ENCODE measurements at regions of chr22 and their contacts with region 1.

Region 1: GRCh38 chr22:37608477-37609239 is at the start of gene GGA1:
- DNase-seq: peak; percentile 82
- ATAC-seq: peak; percentile 74
- H3K4me3 Mint-ChIP-seq: peak within 1 kb of the TSS; percentile 90
- H3K27ac Mint-ChIP-seq: peak within 1 kb of the TSS; percentile 94
- H3K4me1 Mint-ChIP-seq: peaks cover 41% of the 10 kb centered on the region
- H3K27me3 Mint-ChIP-seq: peaks cover 15% of the 10 kb centered on the region
- CTCF ChIP-seq: no peak
- total RNA-seq, gene GGA1: 102 and 126 TPM in 2 replicates

Region 2: GRCh38 chr22:37476389-37477329 is 132.0 kb before region 1 on chr22:
- CTCF ChIA-PET with region 1: no interaction called
- POLR2A ChIA-PET with region 1: no interaction called
- intact Hi-C with region 1: no loop called
- DNase-seq: no peak
- ATAC-seq: no peak
- H3K4me3 Mint-ChIP-seq: no peak overlapping the region
- H3K27ac Mint-ChIP-seq: no peak overlapping the region
- H3K4me1 Mint-ChIP-seq: peaks cover 4% of the 10 kb centered on the region
- H3K27me3 Mint-ChIP-seq: no peaks in the 10 kb centered on the region
- CTCF ChIP-seq: no peak

Region 3: GRCh38 chr22:37594237-37594636 is 14.4 kb before region 1 on chr22:
- CTCF ChIA-PET with region 1: interaction called, 33 read pairs
- POLR2A ChIA-PET with region 1: interaction called, 36 read pairs
- intact Hi-C with region 1: loop called (anchors 1 kb)
- DNase-seq: no peak
- ATAC-seq: no peak
- H3K4me3 Mint-ChIP-seq: no peak overlapping the region
- H3K27ac Mint-ChIP-seq: no peak overlapping the region
- H3K4me1 Mint-ChIP-seq: peaks cover 11% of the 10 kb centered on the region
- H3K27me3 Mint-ChIP-seq: no peaks in the 10 kb centered on the region
- CTCF ChIP-seq: no peak

Region 4: GRCh38 chr22:37658133-37659065 is 49.7 kb after region 1 on chr22 and contains the start of gene PDXP:
- CTCF ChIA-PET with region 1: interaction called, 5 read pairs
- POLR2A ChIA-PET with region 1: interaction called, 65 read pairs
- intact Hi-C with region 1: loop called (anchors 1 kb)
- DNase-seq: peak; percentile 96
- ATAC-seq: peak; percentile 92
- H3K4me3 Mint-ChIP-seq: peak within 1 kb of the TSS; percentile 93
- H3K27ac Mint-ChIP-seq: peak within 1 kb of the TSS; percentile 99
- H3K4me1 Mint-ChIP-seq: peaks cover 47% of the 10 kb centered on the region
- H3K27me3 Mint-ChIP-seq: no peaks in the 10 kb centered on the region
- CTCF ChIP-seq: no peak
- total RNA-seq, gene PDXP: 17.7 and 22.6 TPM in 2 replicates

Region 5: GRCh38 chr22:37807410-37808293 is 199.0 kb after region 1 on chr22 and contains the start of gene GCAT:
- CTCF ChIA-PET with region 1: interaction called, 5 read pairs
- POLR2A ChIA-PET with region 1: interaction called, 4 read pairs
- intact Hi-C with region 1: loop called (anchors 1 kb)
- DNase-seq: peak; percentile 73
- ATAC-seq: peak; percentile 98
- H3K4me3 Mint-ChIP-seq: peak within 1 kb of the TSS; percentile 70
- H3K27ac Mint-ChIP-seq: no peak within 1 kb of the TSS
- H3K4me1 Mint-ChIP-seq: peaks cover 43% of the 10 kb centered on the region
- H3K27me3 Mint-ChIP-seq: peaks cover 46% of the 10 kb centered on the region
- CTCF ChIP-seq: no peak
- total RNA-seq, gene GCAT: 0.40 and 0.83 TPM in 2 replicates

Region 6: DNA sequence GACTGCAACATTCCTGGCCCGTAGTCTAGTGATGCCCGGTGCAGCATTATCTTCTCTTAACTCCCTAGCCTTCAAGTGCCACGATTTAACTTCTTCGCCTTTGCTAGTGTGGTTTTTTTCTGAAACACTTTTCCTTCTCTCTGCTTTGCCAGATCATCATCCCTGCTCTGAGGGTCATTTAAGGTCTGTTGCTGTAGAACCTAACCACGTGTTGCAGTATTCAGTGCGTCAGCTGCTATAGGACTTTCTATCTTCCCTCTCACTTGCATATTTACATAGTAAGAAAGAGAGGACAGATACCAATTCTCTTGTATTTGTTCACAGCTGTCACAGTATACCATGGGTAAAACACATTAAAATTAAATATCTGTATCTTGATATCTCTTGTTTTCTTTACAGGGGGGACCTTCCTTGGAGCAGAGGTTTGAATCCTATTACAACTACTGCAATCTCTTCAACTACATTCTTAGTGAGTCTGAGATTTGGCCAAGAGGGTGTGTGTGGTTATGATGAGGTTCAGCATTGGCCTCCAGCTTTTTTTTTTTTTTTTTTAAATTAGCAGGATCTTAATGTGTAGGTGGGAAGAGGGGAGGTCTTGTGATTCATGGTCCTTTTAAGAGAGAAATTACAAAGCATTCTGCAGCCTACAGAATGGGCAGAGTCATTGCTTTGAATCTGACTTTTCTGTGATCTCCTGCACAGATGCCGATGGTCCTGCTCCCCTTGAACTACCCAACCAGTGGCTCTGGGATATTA is 254.1 kb after region 1 on chr22:
- CTCF ChIA-PET with region 1: interaction called, 20 read pairs
- POLR2A ChIA-PET with region 1: interaction called, 4 read pairs
- intact Hi-C with region 1: loop called (anchors 1 kb)
- DNase-seq: no peak
- ATAC-seq: no peak
- H3K4me3 Mint-ChIP-seq: no peak overlapping the region
- H3K27ac Mint-ChIP-seq: no peak overlapping the region
- H3K4me1 Mint-ChIP-seq: no peaks in the 10 kb centered on the region
- H3K27me3 Mint-ChIP-seq: no peaks in the 10 kb centered on the region
- CTCF ChIP-seq: no peak

Region 7: GRCh38 chr22:38872172-38872830 is 1263.6 kb after region 1 on chr22 and contains the start of gene CBX6:
- CTCF ChIA-PET with region 1: no interaction called
- POLR2A ChIA-PET with region 1: no interaction called
- intact Hi-C with region 1: loop called (anchors 10 kb)
- DNase-seq: peak; percentile 97
- ATAC-seq: peak; percentile 73
- H3K4me3 Mint-ChIP-seq: peak within 1 kb of the TSS; percentile 92
- H3K27ac Mint-ChIP-seq: peak within 1 kb of the TSS; percentile 83
- H3K4me1 Mint-ChIP-seq: peaks cover 53% of the 10 kb centered on the region
- H3K27me3 Mint-ChIP-seq: peaks cover 2% of the 10 kb centered on the region
- CTCF ChIP-seq: no peak
- total RNA-seq, gene CBX6: 65.6 and 71.8 TPM in 2 replicates